ENCODE measurements at regions of chr11 and their contacts with region 1.

Region 1: GRCh38 chr11:46611526-46612304 is 5.3 kb downstream of the HARBI1 start:
- DNase-seq: no peak

Region 2: DNA sequence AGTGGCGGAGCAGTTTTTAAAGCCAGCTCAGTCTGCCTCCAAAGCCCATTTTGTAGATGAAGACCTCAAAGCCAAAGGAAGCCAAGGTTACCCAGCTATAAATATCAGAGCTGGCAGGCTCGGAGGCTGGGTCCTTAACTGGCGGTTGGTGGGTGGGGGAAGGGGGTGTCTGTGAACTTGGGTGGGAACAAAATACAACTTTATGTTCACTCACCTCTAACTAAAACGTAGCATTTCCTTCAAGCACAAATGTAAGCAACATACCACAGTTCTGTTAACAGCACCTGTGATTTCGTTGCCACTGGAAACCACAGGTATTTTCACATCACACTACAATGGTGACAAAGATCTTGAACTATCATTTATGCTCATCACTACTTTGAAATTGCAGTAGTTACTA is 1225.9 kb before region 1 on chr11:
- intact Hi-C with region 1: loop called in 1 of 2 experiments (anchors 5 kb)
- DNase-seq: peak; percentile 22